Mucosa of descending colon (tissue), 3 donors: ENCODE measurements at regions of chr6 and their contacts with region 1.

Region 1: DNA sequence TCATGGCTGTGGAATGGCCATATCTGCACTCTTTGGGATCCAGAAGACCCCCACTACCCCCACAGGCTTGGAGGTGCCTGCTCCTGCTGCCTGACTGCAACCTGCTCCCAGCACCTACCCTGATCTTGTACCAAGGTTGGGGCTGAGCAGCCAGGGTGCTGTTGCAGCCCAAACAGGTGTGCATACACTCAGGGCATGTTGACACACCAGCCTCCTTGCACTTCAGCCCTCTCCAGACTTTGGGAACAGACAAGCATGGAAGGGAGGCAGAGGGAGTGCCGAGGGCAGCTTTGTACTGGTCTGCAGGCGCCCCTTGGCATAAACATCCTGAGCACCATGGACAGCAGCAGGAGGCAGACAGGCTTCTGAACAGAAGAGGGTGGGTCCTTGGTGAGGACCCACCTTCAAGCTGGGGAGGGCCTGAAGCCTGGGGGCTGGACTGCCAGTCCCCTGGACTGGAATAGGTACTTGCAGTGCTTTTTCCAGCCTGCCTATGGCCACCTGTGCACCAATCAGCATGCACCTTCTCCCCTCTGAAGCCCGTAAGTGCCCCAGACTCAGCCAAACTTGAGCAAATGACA is 1675.8 kb downstream of the HACE1 start:
- DNase-seq: no peak
- ATAC-seq: no peak
- H3K4me3 ChIP-seq: no peak overlapping the region
- H3K4me1 ChIP-seq: no peaks in the 10 kb centered on the region
- CTCF ChIP-seq: no peak

Region 2: GRCh38 chr6:102907181-102907580 is 276.7 kb before region 1 on chr6:
- intact Hi-C with region 1: no loop called
- DNase-seq: no peak
- ATAC-seq: no peak
- H3K4me3 ChIP-seq: no peak overlapping the region
- H3K4me1 ChIP-seq: no peaks in the 10 kb centered on the region
- CTCF ChIP-seq: no peak

Region 3: GRCh38 chr6:103153016-103153415 is 30.9 kb before region 1 on chr6:
- intact Hi-C with region 1: loop called in 1 of 2 experiments (anchors 2 kb)
- DNase-seq: no peak
- ATAC-seq: no peak
- H3K4me3 ChIP-seq: no peak overlapping the region
- H3K4me1 ChIP-seq: no peaks in the 10 kb centered on the region
- CTCF ChIP-seq: no peak

Region 4: DNA sequence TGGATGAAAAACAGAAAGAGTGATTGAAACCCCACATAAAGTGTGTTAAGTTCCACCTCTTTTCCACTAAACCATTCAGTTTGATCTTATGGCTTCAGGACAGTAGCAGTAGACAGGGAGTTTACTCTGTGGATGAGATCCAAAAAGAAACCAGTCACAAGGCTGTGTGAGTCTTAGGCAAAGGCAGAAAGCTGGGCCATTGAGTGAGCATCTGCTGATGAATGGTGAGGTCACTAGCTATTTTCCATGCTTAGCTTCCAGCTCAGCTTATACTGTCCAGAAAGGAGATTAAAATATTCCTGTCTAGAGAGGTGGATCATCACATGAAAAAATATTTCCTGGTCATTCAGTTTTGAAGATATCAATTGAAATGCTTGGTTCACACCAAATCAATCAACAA is 31.9 kb after region 1 on chr6:
- intact Hi-C with region 1: no loop called
- DNase-seq: no peak
- ATAC-seq: no peak
- H3K4me3 ChIP-seq: no peak overlapping the region
- H3K4me1 ChIP-seq: no peaks in the 10 kb centered on the region
- CTCF ChIP-seq: no peak